ENCODE measurements at regions of chr1 and their contacts with region 1.

Region 1: DNA sequence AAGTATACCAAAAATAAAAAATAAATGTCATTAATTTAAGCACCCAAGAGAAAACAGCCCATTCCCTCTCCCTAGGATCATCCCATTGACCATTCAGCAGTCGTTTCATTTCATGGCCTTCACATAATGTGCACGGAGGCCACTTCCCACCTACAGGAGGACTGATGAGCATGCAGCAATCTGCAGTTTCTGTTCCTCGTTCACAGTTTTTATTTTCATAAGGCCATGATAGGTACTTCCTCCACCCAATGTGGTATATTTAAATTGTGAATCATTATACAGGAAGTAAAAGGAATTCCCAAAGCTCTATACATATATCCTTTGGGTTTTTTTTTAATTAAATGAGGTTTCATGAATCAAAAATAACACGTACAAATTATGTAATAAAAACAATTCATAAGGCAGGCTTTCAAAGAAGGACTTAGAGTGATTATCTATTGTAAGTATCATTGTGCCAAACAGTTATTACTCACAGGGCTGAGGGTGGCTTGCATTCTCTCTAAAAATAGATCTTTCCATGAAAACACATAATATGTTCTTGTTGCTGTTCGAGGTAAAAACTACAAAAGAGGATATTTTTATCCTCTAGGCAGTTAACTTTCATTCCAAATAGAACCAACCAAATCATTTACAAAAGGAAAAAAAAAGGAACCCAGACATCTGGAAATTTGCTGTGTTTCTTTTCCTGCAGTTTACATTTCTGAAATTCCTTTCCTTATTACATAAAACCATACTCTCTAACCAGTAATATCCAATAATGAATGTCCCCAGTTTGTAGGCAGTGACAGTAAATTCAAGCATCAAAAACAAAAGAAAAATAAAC is 27.5 kb upstream of the SLC44A3 start:
- DNase-seq: no peak
- ATAC-seq: peak; percentile 92
- H3K4me3 Mint-ChIP-seq: peak overlapping the region; percentile 58
- H3K27ac Mint-ChIP-seq: peak overlapping the region; percentile 46
- H3K4me1 Mint-ChIP-seq: peaks cover 49% of the 10 kb centered on the region
- H3K27me3 Mint-ChIP-seq: no peaks in the 10 kb centered on the region
- CTCF ChIP-seq: no peak

Region 2: GRCh38 chr1:94719926-94720793 is 72.5 kb before region 1 on chr1:
- CTCF ChIA-PET with region 1: no interaction called
- POLR2A ChIA-PET with region 1: no interaction called
- intact Hi-C with region 1: loop called (anchors 2 kb)
- DNase-seq: no peak
- ATAC-seq: peak; percentile 90
- H3K4me3 Mint-ChIP-seq: no peak overlapping the region
- H3K27ac Mint-ChIP-seq: peak overlapping the region; percentile 63
- H3K4me1 Mint-ChIP-seq: peaks cover 25% of the 10 kb centered on the region
- H3K27me3 Mint-ChIP-seq: no peaks in the 10 kb centered on the region
- CTCF ChIP-seq: no peak

Region 3: DNA sequence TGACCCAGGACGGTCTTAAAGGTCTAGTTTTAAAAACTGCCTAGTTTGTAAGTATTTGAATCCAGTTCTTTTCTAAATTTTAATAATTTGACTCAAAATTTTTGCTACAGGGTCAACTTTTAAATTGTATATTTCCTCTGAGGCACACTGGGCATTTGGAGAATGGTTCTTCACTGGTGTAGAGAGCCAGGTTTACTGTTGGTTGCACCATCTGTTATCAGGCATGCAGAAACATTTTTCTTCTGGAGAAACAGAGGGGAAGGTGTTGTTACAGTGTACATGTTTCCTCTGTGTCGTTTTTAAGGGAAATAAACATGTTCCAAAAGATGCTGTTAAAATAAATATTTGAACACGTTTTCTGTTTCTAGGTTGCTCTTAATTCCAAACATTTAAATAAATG is 402.4 kb after region 1 on chr1:
- CTCF ChIA-PET with region 1: no interaction called
- POLR2A ChIA-PET with region 1: no interaction called
- intact Hi-C with region 1: no loop called
- DNase-seq: no peak
- ATAC-seq: no peak
- H3K4me3 Mint-ChIP-seq: no peak overlapping the region
- H3K27ac Mint-ChIP-seq: no peak overlapping the region
- H3K4me1 Mint-ChIP-seq: no peaks in the 10 kb centered on the region
- H3K27me3 Mint-ChIP-seq: peaks cover 2% of the 10 kb centered on the region
- CTCF ChIP-seq: no peak

Measured in activated B cell treated with CpG ODN at 0.5 μM for 24 hours (primary cell).